ENCODE measurements at regions of chr7 and their contacts with region 1.

Region 1: GRCh38 chr7:16062269-16062668 is 359.1 kb downstream of the CRPPA start:
- DNase-seq: peak; percentile 95
- H3K4me3 ChIP-seq: no peak overlapping the region
- H3K27ac ChIP-seq: peak overlapping the region; percentile 88
- H3K4me1 ChIP-seq: peaks cover 34% of the 10 kb centered on the region
- H3K27me3 ChIP-seq: no peaks in the 10 kb centered on the region
- CTCF ChIP-seq: no peak
- POLR2A ChIP-seq: no peak

Region 2: DNA sequence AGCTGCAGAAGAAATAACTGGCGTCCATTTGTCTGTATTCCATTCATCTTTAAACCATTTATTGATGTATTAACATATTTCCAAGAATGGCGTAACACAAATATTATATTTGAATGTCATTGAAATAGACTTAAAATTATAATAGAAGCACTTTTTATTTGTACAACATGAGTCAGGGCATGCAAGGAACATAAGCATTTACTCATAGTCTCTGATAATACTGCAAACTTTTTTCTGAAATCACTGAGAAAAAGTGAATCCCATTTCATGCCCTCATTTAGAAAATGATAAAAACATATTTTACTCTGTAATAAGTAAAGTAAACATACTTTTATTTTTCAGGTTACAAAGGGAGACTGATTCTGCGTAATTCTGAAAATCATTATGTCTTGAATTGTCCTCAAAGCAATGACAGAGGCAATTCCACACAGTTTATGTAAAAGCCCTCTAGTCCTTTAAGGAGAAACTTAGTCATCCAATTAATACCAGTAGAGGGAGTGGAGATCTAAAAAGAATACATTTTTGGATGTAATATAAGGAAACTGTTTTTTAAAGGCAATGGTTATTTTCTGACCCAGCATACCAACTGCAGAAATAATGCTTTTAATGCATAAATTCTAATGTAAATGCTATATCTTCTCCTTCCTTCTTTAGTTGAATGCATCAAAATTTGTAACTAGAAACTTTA is 558.5 kb before region 1 on chr7:
- CTCF ChIA-PET with region 1: no interaction called
- POLR2A ChIA-PET with region 1: no interaction called
- dilution Hi-C with region 1: no loop called
- intact Hi-C with region 1: loop called (anchors 1 kb)
- DNase-seq: peak; percentile 76
- H3K4me3 ChIP-seq: no peak overlapping the region
- H3K27ac ChIP-seq: peak overlapping the region; percentile 71
- H3K4me1 ChIP-seq: peaks cover 54% of the 10 kb centered on the region
- H3K27me3 ChIP-seq: no peaks in the 10 kb centered on the region
- CTCF ChIP-seq: no peak
- POLR2A ChIP-seq: no peak

Region 3: DNA sequence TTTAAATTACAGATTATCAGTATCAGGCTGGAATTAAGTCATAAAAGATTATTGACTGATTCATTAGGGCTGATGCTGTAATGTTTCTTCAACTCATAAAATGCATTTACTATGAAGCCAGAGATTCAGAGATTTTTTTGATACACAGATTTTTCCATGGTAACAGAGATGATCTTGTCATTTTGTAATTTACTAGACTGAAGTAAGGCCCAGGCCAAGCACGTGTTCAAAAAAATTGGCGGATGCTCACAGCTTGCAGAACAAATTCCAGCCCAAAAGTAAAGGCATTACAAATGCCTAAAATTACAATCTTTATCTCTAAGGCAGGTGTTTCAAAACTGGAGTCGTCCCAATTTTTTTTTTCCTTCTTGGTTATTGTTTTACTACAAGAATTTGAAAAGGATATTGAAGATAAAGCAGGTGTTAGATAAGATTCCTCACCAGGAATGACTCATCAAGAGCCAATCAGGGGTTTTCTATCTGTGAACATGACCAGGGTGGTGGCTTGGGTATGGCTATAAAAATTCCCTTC is 297.4 kb before region 1 on chr7:
- CTCF ChIA-PET with region 1: no interaction called
- POLR2A ChIA-PET with region 1: no interaction called
- dilution Hi-C with region 1: no loop called
- intact Hi-C with region 1: loop called (anchors 1 kb)
- DNase-seq: peak; percentile 72
- H3K4me3 ChIP-seq: no peak overlapping the region
- H3K27ac ChIP-seq: no peak overlapping the region
- H3K4me1 ChIP-seq: peaks cover 4% of the 10 kb centered on the region
- H3K27me3 ChIP-seq: no peaks in the 10 kb centered on the region
- CTCF ChIP-seq: no peak
- POLR2A ChIP-seq: no peak

Region 4: GRCh38 chr7:15921576-15921975 is 140.7 kb before region 1 on chr7:
- CTCF ChIA-PET with region 1: interaction called, 6 read pairs
- POLR2A ChIA-PET with region 1: no interaction called
- dilution Hi-C with region 1: no loop called
- intact Hi-C with region 1: loop called (anchors 1 kb)
- DNase-seq: peak; percentile 59
- H3K4me3 ChIP-seq: peak overlapping the region in 2 of 3 experiments; percentile 28 to 40
- H3K27ac ChIP-seq: peak overlapping the region; percentile 26
- H3K4me1 ChIP-seq: peaks cover 13% of the 10 kb centered on the region
- H3K27me3 ChIP-seq: no peaks in the 10 kb centered on the region
- CTCF ChIP-seq: peak in 1 of 2 donors; percentile 1
- POLR2A ChIP-seq: no peak

Region 5: GRCh38 chr7:16083931-16084330 is 21.7 kb after region 1 on chr7:
- CTCF ChIA-PET with region 1: no interaction called
- POLR2A ChIA-PET with region 1: no interaction called
- dilution Hi-C with region 1: no loop called
- intact Hi-C with region 1: loop called (anchors 1 kb)
- DNase-seq: peak; percentile 85
- H3K4me3 ChIP-seq: no peak overlapping the region
- H3K27ac ChIP-seq: peak overlapping the region; percentile 84
- H3K4me1 ChIP-seq: peaks cover 42% of the 10 kb centered on the region
- H3K27me3 ChIP-seq: no peaks in the 10 kb centered on the region
- CTCF ChIP-seq: no peak
- POLR2A ChIP-seq: no peak

Measured in endothelial cell of umbilical vein (primary cell).